CD8-positive, alpha-beta T cell (primary cell): ENCODE measurements at regions of chr3 and their contacts with region 1.

Region 1: GRCh38 chr3:120095226-120095978 is 1.2 kb upstream of the GSK3B start:
- DNase-seq: peak; percentile 68 to 91 (median 81)
- ATAC-seq: peak; percentile 27
- H3K4me3 ChIP-seq: peak overlapping the region; percentile 84 to 89
- H3K4me3 Mint-ChIP-seq: no peak overlapping the region
- H3K27ac ChIP-seq: peak overlapping the region; percentile 98
- H3K27ac Mint-ChIP-seq: no peak overlapping the region
- H3K4me1 ChIP-seq: peaks cover 32% of the 10 kb centered on the region
- H3K4me1 Mint-ChIP-seq: peaks cover 26% of the 10 kb centered on the region
- H3K27me3 ChIP-seq: no peaks in the 10 kb centered on the region
- H3K27me3 Mint-ChIP-seq: no peaks in the 10 kb centered on the region
- CTCF ChIP-seq: no peak

Region 2: GRCh38 chr3:119240591-119241434 is 854.6 kb before region 1 on chr3 and contains the start of gene B4GALT4:
- CTCF ChIA-PET with region 1: no interaction called
- POLR2A ChIA-PET with region 1: interaction called, 3 read pairs
- intact Hi-C with region 1: loop called (anchors 2 to 5 kb)
- DNase-seq: peak; percentile 34 to 83 (median 63)
- ATAC-seq: peak; percentile 67
- H3K4me3 ChIP-seq: peak within 1 kb of the TSS; percentile 66 to 72
- H3K4me3 Mint-ChIP-seq: peak within 1 kb of the TSS; percentile 88
- H3K27ac ChIP-seq: peak within 1 kb of the TSS; percentile 58 to 67
- H3K27ac Mint-ChIP-seq: peak within 1 kb of the TSS; percentile 92
- H3K4me1 ChIP-seq: peaks cover 30% of the 10 kb centered on the region
- H3K4me1 Mint-ChIP-seq: peaks cover 40% of the 10 kb centered on the region
- H3K27me3 ChIP-seq: no peaks in the 10 kb centered on the region
- H3K27me3 Mint-ChIP-seq: no peaks in the 10 kb centered on the region
- CTCF ChIP-seq: no peak
- total RNA-seq, gene B4GALT4: 18.2 to 18.6 TPM

Region 3: GRCh38 chr3:119498186-119498987 is 597.0 kb before region 1 on chr3 and contains the start of gene TIMMDC1:
- CTCF ChIA-PET with region 1: no interaction called
- POLR2A ChIA-PET with region 1: interaction called, 3 read pairs
- intact Hi-C with region 1: loop called in 1 of 2 experiments (anchors 10 kb)
- DNase-seq: peak; percentile 93 to 99 (median 98)
- ATAC-seq: peak; percentile 96
- H3K4me3 ChIP-seq: peak within 1 kb of the TSS; percentile 81 to 87
- H3K4me3 Mint-ChIP-seq: peak within 1 kb of the TSS; percentile 100
- H3K27ac ChIP-seq: peak within 1 kb of the TSS; percentile 92 to 95
- H3K27ac Mint-ChIP-seq: peak within 1 kb of the TSS; percentile 100
- H3K4me1 ChIP-seq: peaks cover 25% of the 10 kb centered on the region
- H3K4me1 Mint-ChIP-seq: peaks cover 40% of the 10 kb centered on the region
- H3K27me3 ChIP-seq: no peaks in the 10 kb centered on the region
- H3K27me3 Mint-ChIP-seq: no peaks in the 10 kb centered on the region
- CTCF ChIP-seq: no peak
- total RNA-seq, gene TIMMDC1: 12.1 to 16.8 TPM

Region 4: DNA sequence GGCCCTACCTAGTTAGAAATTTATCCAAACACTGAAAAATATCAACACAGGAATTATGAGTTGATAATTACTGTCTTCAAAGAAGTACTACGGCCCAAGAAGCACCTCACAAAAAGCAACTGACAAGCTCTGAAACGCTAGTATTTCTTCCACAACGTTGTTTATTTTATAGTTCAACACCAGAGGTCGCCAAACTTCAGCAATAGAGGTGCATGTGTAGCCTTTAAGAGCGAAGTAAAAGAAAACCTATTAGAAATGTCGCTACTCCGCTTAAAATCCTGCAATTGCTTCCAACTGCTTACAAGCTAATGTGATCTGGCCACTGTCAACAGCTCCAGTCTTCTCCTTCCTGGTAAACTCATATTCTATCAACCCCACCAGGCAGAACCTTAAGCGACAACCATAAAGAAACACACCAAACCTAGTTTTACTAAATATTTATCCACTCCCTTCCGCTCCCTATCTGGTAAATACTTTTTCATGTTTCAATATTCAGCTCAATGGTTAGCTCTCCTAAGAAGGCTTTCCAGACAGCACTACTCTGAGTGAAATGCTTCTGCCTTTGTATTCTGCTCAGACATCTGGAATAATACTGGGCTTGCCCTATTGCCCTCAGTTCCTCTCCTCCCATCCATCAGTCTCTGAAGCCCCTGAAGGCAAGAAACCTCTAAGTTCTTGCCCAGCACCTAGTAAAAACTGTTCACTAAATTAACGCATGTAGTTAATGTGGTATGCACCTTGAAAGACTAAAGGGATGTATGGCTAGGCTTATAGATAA is 203.3 kb before region 1 on chr3:
- CTCF ChIA-PET with region 1: interaction called, 5 read pairs
- POLR2A ChIA-PET with region 1: interaction called, 3 read pairs
- intact Hi-C with region 1: loop called in 1 of 2 experiments (anchors 1 kb)
- DNase-seq: peak in 8 of 9 experiments; percentile 10 to 76 (median 42)
- ATAC-seq: peak; percentile 68
- H3K4me3 ChIP-seq: no peak overlapping the region
- H3K4me3 Mint-ChIP-seq: no peak overlapping the region
- H3K27ac ChIP-seq: no peak overlapping the region
- H3K27ac Mint-ChIP-seq: no peak overlapping the region
- H3K4me1 ChIP-seq: peaks cover 3% of the 10 kb centered on the region
- H3K4me1 Mint-ChIP-seq: peaks cover 11% of the 10 kb centered on the region
- H3K27me3 ChIP-seq: no peaks in the 10 kb centered on the region
- H3K27me3 Mint-ChIP-seq: no peaks in the 10 kb centered on the region
- CTCF ChIP-seq: peak; percentile 85

Region 5: GRCh38 chr3:120147072-120147871 is 51.9 kb after region 1 on chr3:
- CTCF ChIA-PET with region 1: interaction called, 10 read pairs
- POLR2A ChIA-PET with region 1: interaction called, 13 read pairs
- intact Hi-C with region 1: loop called in 1 of 2 experiments (anchors 1 kb)
- DNase-seq: peak; percentile 7 to 81 (median 60)
- ATAC-seq: peak; percentile 98
- H3K4me3 ChIP-seq: no peak overlapping the region
- H3K4me3 Mint-ChIP-seq: no peak overlapping the region
- H3K27ac ChIP-seq: no peak overlapping the region
- H3K27ac Mint-ChIP-seq: peak overlapping the region; percentile 60
- H3K4me1 ChIP-seq: peaks cover 10% of the 10 kb centered on the region
- H3K4me1 Mint-ChIP-seq: peaks cover 22% of the 10 kb centered on the region
- H3K27me3 ChIP-seq: no peaks in the 10 kb centered on the region
- H3K27me3 Mint-ChIP-seq: no peaks in the 10 kb centered on the region
- CTCF ChIP-seq: peak; percentile 62

Region 6: GRCh38 chr3:120742198-120742849 is 646.9 kb after region 1 on chr3 and contains the starts of genes GTF2E1 and RABL3:
- CTCF ChIA-PET with region 1: no interaction called
- POLR2A ChIA-PET with region 1: no interaction called
- intact Hi-C with region 1: loop called (anchors 1 to 5 kb)
- DNase-seq: peak; percentile 93 to 99 (median 97)
- ATAC-seq: peak; percentile 96
- H3K4me3 ChIP-seq: peak within 1 kb of the TSS; percentile 89 to 90
- H3K4me3 Mint-ChIP-seq: peak within 1 kb of the TSS; percentile 94
- H3K27ac ChIP-seq: peak within 1 kb of the TSS; percentile 97 to 98
- H3K27ac Mint-ChIP-seq: peak within 1 kb of the TSS; percentile 98
- H3K4me1 ChIP-seq: peaks cover 16% of the 10 kb centered on the region
- H3K4me1 Mint-ChIP-seq: peaks cover 49% of the 10 kb centered on the region
- H3K27me3 ChIP-seq: no peaks in the 10 kb centered on the region
- H3K27me3 Mint-ChIP-seq: no peaks in the 10 kb centered on the region
- CTCF ChIP-seq: no peak
- total RNA-seq, gene GTF2E1: 5.8 to 7.8 TPM
- total RNA-seq, gene RABL3: 14.0 to 15.2 TPM